Left lung (tissue), 14 donors: ENCODE measurements at regions of chr17 and their contacts with region 1.

Region 1: GRCh38 chr17:13925579-13925978 is 143.7 kb upstream of the COX10 start:
- DNase-seq: no peak
- ATAC-seq: no peak
- H3K4me3 ChIP-seq: no peak overlapping the region
- H3K27ac ChIP-seq: no peak overlapping the region
- H3K4me1 ChIP-seq: no peaks in the 10 kb centered on the region
- H3K27me3 ChIP-seq: no peaks in the 10 kb centered on the region
- CTCF ChIP-seq: no peak

Region 2: GRCh38 chr17:13584701-13585080 is 340.9 kb before region 1 on chr17:
- intact Hi-C with region 1: loop called in 1 of 2 experiments (anchors 10 kb)
- DNase-seq: no peak
- ATAC-seq: no peak
- H3K4me3 ChIP-seq: no peak overlapping the region
- H3K27ac ChIP-seq: no peak overlapping the region
- H3K4me1 ChIP-seq: peaks cover 0 to 2% of the 10 kb centered on the region in 2 donors
- H3K27me3 ChIP-seq: no peaks in the 10 kb centered on the region
- CTCF ChIP-seq: no peak